CD4-positive, alpha-beta T cell (primary cell): ENCODE measurements at regions of chr17 and their contacts with region 1.

Region 1: DNA sequence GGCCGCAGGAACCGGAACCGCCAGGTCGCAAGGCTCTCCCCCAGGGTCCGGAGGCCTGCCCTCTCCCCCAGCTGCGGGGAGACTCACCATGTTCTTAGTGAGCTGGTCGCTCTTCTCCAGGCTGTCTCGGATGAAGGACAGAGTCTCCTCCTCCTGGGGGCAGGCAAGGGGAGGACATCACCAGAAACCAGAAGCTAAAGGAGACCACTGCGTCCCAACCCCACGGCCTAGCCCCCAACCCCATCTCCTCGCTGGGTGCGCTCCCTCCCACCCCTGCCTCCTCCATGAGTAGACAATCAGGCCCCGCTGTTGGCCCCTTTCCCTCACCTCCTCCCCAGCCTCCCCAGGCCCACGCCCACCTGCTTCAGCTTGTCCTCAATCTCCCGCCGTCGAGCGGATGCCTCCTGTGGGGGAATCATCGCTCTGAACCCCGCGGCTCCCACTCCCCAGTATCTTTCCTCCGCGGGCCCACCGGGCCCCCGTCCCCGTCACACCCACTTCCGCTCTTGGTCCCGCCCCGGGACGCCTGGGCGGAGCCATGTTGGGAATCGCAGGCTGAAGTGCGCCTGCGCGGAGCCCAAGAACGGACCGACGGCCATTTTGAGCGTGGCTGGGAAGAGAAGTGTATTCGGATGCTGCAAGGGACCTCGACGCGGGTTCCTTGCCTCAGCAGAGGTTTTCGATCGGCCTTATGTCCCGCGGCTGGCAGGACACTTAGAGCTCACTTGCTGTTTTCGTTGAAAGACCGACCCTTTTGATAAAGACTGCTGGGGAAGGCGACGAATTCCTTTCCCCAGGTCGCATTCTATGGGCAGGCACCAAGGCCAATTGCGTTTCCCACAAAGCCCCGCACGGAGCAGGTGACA is at the start of gene EXOC7:
- DNase-seq: peak; percentile 86 to 97 (median 92)
- ATAC-seq: peak; percentile 94
- H3K4me3 ChIP-seq: peak within 1 kb of the TSS; percentile 85
- H3K4me3 Mint-ChIP-seq: peak within 1 kb of the TSS; percentile 98
- H3K27ac ChIP-seq: peak within 1 kb of the TSS; percentile 68 to 82
- H3K27ac Mint-ChIP-seq: peak within 1 kb of the TSS; percentile 90
- H3K4me1 ChIP-seq: peaks cover 32% of the 10 kb centered on the region
- H3K4me1 Mint-ChIP-seq: peaks cover 38% of the 10 kb centered on the region
- H3K27me3 ChIP-seq: no peaks in the 10 kb centered on the region
- H3K27me3 Mint-ChIP-seq: no peaks in the 10 kb centered on the region
- CTCF ChIP-seq: no peak
- total RNA-seq, gene EXOC7: 88.1 to 90.6 TPM

Region 2: GRCh38 chr17:76072148-76072858 is 31.2 kb before region 1 on chr17 and contains the start of gene SRP68:
- CTCF ChIA-PET with region 1: no interaction called
- POLR2A ChIA-PET with region 1: interaction called, 6 read pairs
- intact Hi-C with region 1: loop called in 1 of 2 experiments (anchors 1 kb)
- DNase-seq: peak; percentile 66 to 92 (median 82)
- ATAC-seq: peak; percentile 79
- H3K4me3 ChIP-seq: peak within 1 kb of the TSS; percentile 99
- H3K4me3 Mint-ChIP-seq: peak within 1 kb of the TSS; percentile 95
- H3K27ac ChIP-seq: peak within 1 kb of the TSS; percentile 70 to 82
- H3K27ac Mint-ChIP-seq: peak within 1 kb of the TSS; percentile 91
- H3K4me1 ChIP-seq: peaks cover 64% of the 10 kb centered on the region
- H3K4me1 Mint-ChIP-seq: peaks cover 49% of the 10 kb centered on the region
- H3K27me3 ChIP-seq: peaks cover 29 to 32% of the 10 kb centered on the region in 2 experiments
- H3K27me3 Mint-ChIP-seq: peaks cover 35% of the 10 kb centered on the region
- CTCF ChIP-seq: no peak
- total RNA-seq, gene SRP68: 106 to 108 TPM

Region 3: DNA sequence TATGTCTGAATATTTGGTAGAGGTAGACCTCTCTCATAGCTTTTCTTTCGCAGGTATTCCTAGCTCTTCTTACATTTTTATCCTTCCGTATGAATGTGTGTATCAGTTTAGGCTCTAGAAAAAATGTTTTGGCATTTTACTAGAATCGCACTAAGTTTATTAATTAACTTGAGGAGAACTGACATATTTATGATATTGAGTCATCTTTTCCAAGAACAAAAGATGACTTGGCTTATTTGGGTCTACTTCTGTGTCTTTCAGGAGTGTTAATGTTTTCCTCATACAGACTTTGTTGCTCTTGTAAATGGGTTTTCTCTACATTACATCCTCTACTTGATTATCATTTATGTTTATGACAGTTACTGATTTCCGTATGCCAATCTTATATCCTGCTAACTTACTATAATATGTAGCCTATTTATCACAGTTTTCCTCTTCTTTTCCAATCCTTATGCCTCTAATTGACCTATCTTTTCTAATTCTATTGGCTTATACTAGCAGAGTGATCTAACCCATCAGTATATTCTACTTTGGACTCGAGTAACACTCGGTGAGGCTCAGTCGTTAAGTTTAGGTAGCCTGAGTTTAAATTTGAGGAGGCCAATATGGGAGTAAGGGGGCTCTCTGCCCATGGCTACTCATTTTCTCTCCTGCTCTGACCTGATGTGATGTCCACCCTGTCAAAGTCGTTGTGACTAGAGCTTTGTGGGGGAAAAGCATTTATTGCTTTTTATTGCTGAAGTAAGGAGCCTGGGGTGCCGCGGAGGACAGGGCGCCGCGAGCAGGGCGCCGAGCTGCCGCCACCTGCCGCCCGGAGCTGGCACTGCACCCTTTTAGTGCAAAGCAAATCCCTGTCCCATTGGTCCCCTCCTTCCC is 520.0 kb after region 1 on chr17:
- CTCF ChIA-PET with region 1: no interaction called
- POLR2A ChIA-PET with region 1: no interaction called
- intact Hi-C with region 1: no loop called
- DNase-seq: peak; percentile 59 to 87 (median 74)
- ATAC-seq: peak; percentile 99
- H3K4me3 ChIP-seq: no peak overlapping the region
- H3K4me3 Mint-ChIP-seq: no peak overlapping the region
- H3K27ac ChIP-seq: no peak overlapping the region
- H3K27ac Mint-ChIP-seq: no peak overlapping the region
- H3K4me1 ChIP-seq: peaks cover 5% of the 10 kb centered on the region
- H3K4me1 Mint-ChIP-seq: peaks cover 5% of the 10 kb centered on the region
- H3K27me3 ChIP-seq: no peaks in the 10 kb centered on the region
- H3K27me3 Mint-ChIP-seq: peaks cover 10% of the 10 kb centered on the region
- CTCF ChIP-seq: peak; percentile 94